Mammary epithelial cell (primary cell): ENCODE measurements at regions of chrX and their contacts with region 1.

Region 1: DNA sequence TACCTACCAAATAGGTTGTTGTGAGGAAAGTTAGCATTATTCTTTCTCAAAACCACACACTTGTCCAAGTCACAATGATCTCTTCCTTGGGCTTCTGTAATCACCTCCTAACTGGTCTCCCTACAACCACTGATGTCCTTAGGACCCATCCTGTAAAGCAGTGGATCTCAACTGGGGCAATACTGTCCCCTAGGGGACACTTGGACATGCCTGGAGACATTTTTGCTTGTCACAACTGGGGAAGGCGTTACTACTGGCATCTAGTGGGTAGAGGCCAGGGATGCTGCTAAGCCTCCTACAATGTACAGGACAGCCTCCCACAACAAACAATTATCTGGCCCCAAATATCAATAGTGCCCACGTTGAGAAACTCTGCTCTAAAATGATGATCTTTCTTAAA is 118.7 kb upstream of the AP1S2 start:
- DNase-seq: peak; percentile 48
- H3K4me3 ChIP-seq: no peak overlapping the region
- H3K27ac ChIP-seq: no peak overlapping the region
- H3K4me1 ChIP-seq: no peaks in the 10 kb centered on the region
- H3K27me3 ChIP-seq: no peaks in the 10 kb centered on the region
- CTCF ChIP-seq: peak; percentile 62 to 76

Region 2: DNA sequence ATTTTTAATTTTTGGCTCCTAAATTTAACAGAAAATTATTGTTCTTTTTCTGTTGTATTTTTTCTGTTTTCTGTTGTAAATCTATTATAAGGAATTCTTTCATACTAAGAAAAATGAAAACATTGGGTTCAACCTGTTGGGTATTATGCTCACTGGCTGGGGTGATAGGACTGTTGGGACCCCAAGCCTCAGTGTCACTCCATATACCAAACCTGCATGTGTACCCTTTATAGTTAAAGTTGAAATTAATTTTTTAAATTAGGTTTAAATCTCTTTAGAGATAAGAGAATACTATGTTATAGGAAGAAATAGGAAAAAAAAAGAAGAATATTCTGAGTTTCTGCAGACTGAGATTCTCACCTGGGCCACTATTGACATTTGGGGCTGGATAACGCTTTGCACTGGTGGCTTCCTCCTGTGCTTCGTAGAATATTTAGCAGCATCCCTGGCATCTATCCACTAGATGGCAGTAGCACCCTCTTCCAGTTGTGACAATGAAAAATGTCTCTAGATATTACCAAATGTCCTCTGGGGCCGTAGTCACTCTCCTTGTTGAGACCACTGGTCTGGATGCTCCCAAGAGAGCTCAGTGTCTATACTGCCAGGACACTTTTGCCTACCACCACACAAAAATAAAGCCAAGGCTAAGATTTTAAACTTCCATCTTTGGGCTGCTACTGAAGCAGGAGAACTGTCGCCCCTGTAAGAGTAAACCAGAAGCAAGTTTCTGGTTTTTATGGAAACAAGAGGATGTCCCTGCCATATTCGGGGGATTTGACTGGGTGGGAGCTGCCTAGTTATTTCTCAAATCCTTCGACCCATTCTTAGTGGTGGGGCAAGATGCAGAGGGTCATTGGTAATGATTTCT is 286.2 kb before region 1 on chrX:
- CTCF ChIA-PET with region 1: no interaction called
- dilution Hi-C with region 1: no loop called
- in situ Hi-C with region 1: no loop called
- intact Hi-C with region 1: loop called (anchors 1 kb)
- DNase-seq: peak; percentile 49
- H3K4me3 ChIP-seq: no peak overlapping the region
- H3K27ac ChIP-seq: no peak overlapping the region
- H3K4me1 ChIP-seq: no peaks in the 10 kb centered on the region
- H3K27me3 ChIP-seq: no peaks in the 10 kb centered on the region
- CTCF ChIP-seq: peak; percentile 87 to 89

Region 3: DNA sequence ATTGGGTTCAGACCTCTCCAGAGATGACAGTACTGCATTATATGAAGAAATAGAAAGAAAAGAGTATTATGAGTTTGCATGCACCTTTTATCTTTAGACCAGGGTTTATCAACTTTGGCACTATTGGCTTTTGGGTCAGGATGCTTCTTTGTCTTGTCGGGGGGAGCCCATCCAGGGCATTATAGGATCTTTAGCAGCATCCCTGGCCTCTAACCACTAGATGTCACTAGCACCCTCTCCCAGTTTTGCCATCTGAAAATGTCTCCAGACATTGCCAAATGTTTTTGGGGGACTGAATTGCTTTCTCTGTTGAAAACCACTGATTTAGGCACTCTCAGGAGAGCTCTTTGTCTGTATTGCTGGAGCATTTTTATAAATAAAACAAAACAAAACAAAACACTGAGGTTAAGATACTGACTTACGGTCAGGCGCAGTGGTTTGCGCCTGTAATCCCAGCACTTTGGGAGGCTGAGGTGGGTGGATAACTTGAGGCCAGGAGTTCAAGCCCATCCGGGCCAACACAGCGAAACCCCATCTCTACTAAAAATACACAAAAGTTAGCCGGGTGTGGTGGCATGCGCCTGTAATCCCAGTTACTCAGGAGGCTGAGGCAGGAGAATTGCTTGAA is 211.6 kb before region 1 on chrX:
- CTCF ChIA-PET with region 1: no interaction called
- dilution Hi-C with region 1: no loop called
- in situ Hi-C with region 1: no loop called
- intact Hi-C with region 1: loop called (anchors 2 kb)
- DNase-seq: no peak
- H3K4me3 ChIP-seq: no peak overlapping the region
- H3K27ac ChIP-seq: no peak overlapping the region
- H3K4me1 ChIP-seq: no peaks in the 10 kb centered on the region
- H3K27me3 ChIP-seq: no peaks in the 10 kb centered on the region
- CTCF ChIP-seq: peak; percentile 70 to 81

Region 4: DNA sequence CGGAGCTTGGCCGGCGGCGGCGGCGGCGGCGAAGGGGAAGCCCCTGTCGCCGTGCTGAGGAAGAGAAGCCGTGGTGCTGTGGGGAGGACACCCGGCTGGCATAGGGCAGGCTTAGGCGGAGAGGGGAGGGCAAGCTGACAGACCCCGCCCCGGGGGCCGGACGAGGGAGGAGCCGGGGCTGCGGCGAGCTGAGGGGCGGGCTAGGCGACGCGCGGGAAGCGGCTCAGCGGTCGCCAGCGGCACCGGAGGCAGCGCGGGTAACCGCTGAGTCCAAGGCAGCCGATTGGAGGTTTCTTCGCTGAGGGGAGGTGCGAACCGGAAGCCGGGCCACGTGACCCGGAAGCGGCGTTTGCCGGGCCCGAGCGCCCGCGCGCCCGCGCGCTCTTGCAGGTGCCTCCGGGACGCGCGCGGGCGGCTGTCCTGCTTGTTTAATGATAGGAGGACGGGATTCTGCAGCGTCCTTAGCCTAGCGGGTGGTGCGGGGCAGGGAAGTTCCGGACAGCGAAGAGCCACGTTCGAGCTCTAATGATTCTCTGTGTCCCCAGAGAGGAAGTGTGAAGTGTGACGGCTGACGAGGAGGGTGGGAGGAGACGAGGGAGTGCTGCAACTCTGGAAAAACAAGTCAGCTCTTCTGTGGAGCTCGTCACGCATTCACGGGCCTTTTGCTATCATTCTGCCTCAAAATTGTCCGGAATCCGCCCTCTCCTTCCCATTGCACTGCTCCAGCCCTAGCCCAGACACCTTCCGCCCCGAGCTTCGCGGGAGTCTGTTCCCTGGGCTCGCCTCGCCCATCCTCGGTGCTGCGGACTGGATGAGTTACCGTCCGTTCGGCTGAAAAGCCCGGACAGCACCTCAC is 118.4 kb before region 1 on chrX and contains the start of gene AP1S2:
- CTCF ChIA-PET with region 1: no interaction called
- dilution Hi-C with region 1: no loop called
- in situ Hi-C with region 1: no loop called
- intact Hi-C with region 1: loop called (anchors 2 kb)
- DNase-seq: peak; percentile 98
- H3K4me3 ChIP-seq: peak within 1 kb of the TSS; percentile 67 to 90 (median 73)
- H3K27ac ChIP-seq: peak within 1 kb of the TSS; percentile 32
- H3K4me1 ChIP-seq: peaks cover 15% of the 10 kb centered on the region
- H3K27me3 ChIP-seq: no peaks in the 10 kb centered on the region
- CTCF ChIP-seq: no peak
- total RNA-seq, gene AP1S2: 15.8 to 21.6 TPM

Region 5: GRCh38 chrX:15930585-15930984 is 42.7 kb before region 1 on chrX:
- CTCF ChIA-PET with region 1: no interaction called
- dilution Hi-C with region 1: no loop called
- in situ Hi-C with region 1: loop called in 1 of 2 experiments (anchors 5 kb)
- intact Hi-C with region 1: loop called (anchors 1 kb)
- DNase-seq: peak; percentile 45
- H3K4me3 ChIP-seq: no peak overlapping the region
- H3K27ac ChIP-seq: no peak overlapping the region
- H3K4me1 ChIP-seq: no peaks in the 10 kb centered on the region
- H3K27me3 ChIP-seq: peaks cover 1% of the 10 kb centered on the region
- CTCF ChIP-seq: peak; percentile 36 to 65

Region 6: GRCh38 chrX:16177260-16177659 is 204.0 kb after region 1 on chrX:
- CTCF ChIA-PET with region 1: no interaction called
- dilution Hi-C with region 1: no loop called
- in situ Hi-C with region 1: no loop called
- intact Hi-C with region 1: no loop called
- DNase-seq: no peak
- H3K4me3 ChIP-seq: no peak overlapping the region
- H3K27ac ChIP-seq: no peak overlapping the region
- H3K4me1 ChIP-seq: no peaks in the 10 kb centered on the region
- H3K27me3 ChIP-seq: no peaks in the 10 kb centered on the region
- CTCF ChIP-seq: no peak